PC-9 (cell line): ENCODE measurements at regions of chr2 and their contacts with region 1.

Region 1: GRCh38 chr2:18413676-18414396 is 146.6 kb downstream of the RDH14 start:
- DNase-seq: peak; percentile 5 to 58
- H3K4me3 ChIP-seq: no peak overlapping the region
- H3K27ac ChIP-seq: peak overlapping the region; percentile 30; the same call in 1 of the 2 replicates
- H3K4me1 ChIP-seq: peaks cover 17% of the 10 kb centered on the region
- H3K27me3 ChIP-seq: no peaks in the 10 kb centered on the region
- CTCF ChIP-seq: no peak

Region 2: DNA sequence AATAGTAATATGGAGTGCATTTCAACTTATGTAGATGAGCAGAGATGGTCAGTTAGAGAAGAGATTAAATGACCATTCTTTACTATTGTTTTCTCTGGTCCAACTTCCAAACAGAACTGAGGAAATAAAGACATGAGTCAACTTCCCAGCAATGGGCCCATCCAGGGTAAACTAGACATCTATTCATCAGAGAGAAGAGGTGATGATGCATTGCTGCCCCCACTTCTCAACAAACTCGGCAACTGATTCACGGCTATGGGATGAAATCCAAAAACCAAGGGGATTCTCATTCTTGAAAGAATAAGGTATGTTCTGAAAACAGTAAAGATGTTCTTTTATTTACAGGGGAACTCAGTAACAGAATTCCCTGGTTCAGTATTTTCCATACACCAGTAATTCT is 44.1 kb before region 1 on chr2:
- CTCF ChIA-PET with region 1: no interaction called
- POLR2A ChIA-PET with region 1: no interaction called
- intact Hi-C with region 1: no loop called
- DNase-seq: no peak
- H3K4me3 ChIP-seq: no peak overlapping the region
- H3K27ac ChIP-seq: no peak overlapping the region
- H3K4me1 ChIP-seq: no peaks in the 10 kb centered on the region
- H3K27me3 ChIP-seq: no peaks in the 10 kb centered on the region
- CTCF ChIP-seq: no peak

Region 3: GRCh38 chr2:18396329-18397010 is 17.4 kb before region 1 on chr2:
- CTCF ChIA-PET with region 1: no interaction called
- POLR2A ChIA-PET with region 1: no interaction called
- intact Hi-C with region 1: loop called (anchors 1 kb)
- DNase-seq: no peak
- H3K4me3 ChIP-seq: no peak overlapping the region
- H3K27ac ChIP-seq: no peak overlapping the region
- H3K4me1 ChIP-seq: no peaks in the 10 kb centered on the region
- H3K27me3 ChIP-seq: no peaks in the 10 kb centered on the region
- CTCF ChIP-seq: no peak